ENCODE measurements at regions of chr10 and their contacts with region 1.

Region 1: DNA sequence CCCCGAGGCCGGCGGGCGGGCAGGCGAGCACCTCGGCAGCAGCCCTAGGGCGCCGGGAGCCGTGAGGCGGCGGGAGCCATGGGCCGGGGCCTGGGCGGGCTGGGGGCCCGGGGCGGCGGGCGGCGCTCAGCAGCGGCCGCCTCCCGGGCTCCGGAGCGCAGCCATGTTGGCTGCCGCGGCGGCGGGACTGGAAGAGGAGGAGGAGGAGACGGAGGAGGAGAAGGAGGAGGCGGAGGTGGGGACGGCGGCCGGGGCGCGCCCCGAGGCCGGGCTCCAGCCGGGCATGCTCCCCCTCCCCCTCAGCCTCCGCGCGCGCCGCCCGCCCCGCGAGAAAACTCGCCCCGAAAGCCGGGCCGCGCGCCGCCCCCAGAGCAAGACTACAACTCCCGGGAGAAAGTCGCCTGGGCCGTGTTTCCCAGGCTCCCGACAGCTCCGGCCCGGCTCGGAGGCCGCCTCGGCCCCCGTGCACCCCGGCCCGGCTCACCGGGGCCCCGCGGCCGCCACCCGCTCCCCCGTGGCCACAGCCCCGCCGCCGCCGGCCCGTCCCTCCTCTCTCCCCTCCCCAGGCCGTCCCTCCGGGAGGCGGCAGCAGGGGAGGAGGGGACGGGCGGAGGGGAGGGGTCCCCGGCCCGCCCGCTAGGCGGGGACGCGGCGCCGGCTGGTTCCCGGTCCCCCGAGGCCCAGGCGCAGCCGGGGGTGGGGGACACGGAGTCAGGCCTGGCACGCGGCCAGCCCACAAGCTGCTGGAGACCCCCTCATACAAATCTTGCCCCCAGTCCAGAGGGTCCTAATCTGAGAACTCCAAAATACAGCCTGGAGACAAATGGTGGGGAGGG is at the start of gene DLG5:
- DNase-seq: peak; percentile 63 to 74
- H3K4me3 ChIP-seq: peak within 1 kb of the TSS; percentile 84 to 98 (median 86)
- H3K27ac ChIP-seq: peak within 1 kb of the TSS; percentile 91 to 97
- H3K4me1 ChIP-seq: peaks cover 0 to 1% of the 10 kb centered on the region in 2 donors
- H3K27me3 ChIP-seq: no peaks in the 10 kb centered on the region
- CTCF ChIP-seq: peak in 1 of 3 donors; percentile 9
- POLR2A ChIP-seq: no peak
- total RNA-seq, gene DLG5: 43.0 to 192 (median 138) TPM

Region 2: GRCh38 chr10:77873536-77874380 is 53.0 kb before region 1 on chr10:
- intact Hi-C with region 1: loop called (anchors 10 kb)
- DNase-seq: peak; percentile 71 to 87
- H3K4me3 ChIP-seq: peak overlapping the region in 2 of 3 donors; percentile 26 to 53
- H3K27ac ChIP-seq: peak overlapping the region; percentile 96 to 97
- H3K4me1 ChIP-seq: peaks cover 25 to 45% of the 10 kb centered on the region in 2 donors
- H3K27me3 ChIP-seq: no peaks in the 10 kb centered on the region
- CTCF ChIP-seq: no peak
- POLR2A ChIP-seq: no peak

Region 3: GRCh38 chr10:77936697-77937567 is 10.1 kb after region 1 on chr10:
- intact Hi-C with region 1: no loop called
- DNase-seq: no peak
- H3K4me3 ChIP-seq: no peak overlapping the region
- H3K27ac ChIP-seq: peak overlapping the region; percentile 49 to 68
- H3K4me1 ChIP-seq: no peaks in the 10 kb centered on the region
- H3K27me3 ChIP-seq: no peaks in the 10 kb centered on the region
- CTCF ChIP-seq: no peak
- POLR2A ChIP-seq: no peak

Region 4: GRCh38 chr10:77949167-77949566 is 22.4 kb after region 1 on chr10:
- intact Hi-C with region 1: loop called (anchors 1 kb)
- DNase-seq: peak; percentile 62 to 90
- H3K4me3 ChIP-seq: no peak overlapping the region
- H3K27ac ChIP-seq: peak overlapping the region; percentile 64 to 82
- H3K4me1 ChIP-seq: no peaks in the 10 kb centered on the region
- H3K27me3 ChIP-seq: no peaks in the 10 kb centered on the region
- CTCF ChIP-seq: no peak
- POLR2A ChIP-seq: no peak

Measured in breast epithelium (tissue), 4 donors.